ENCODE measurements at regions of chr5 and their contacts with region 1.

Region 1: DNA sequence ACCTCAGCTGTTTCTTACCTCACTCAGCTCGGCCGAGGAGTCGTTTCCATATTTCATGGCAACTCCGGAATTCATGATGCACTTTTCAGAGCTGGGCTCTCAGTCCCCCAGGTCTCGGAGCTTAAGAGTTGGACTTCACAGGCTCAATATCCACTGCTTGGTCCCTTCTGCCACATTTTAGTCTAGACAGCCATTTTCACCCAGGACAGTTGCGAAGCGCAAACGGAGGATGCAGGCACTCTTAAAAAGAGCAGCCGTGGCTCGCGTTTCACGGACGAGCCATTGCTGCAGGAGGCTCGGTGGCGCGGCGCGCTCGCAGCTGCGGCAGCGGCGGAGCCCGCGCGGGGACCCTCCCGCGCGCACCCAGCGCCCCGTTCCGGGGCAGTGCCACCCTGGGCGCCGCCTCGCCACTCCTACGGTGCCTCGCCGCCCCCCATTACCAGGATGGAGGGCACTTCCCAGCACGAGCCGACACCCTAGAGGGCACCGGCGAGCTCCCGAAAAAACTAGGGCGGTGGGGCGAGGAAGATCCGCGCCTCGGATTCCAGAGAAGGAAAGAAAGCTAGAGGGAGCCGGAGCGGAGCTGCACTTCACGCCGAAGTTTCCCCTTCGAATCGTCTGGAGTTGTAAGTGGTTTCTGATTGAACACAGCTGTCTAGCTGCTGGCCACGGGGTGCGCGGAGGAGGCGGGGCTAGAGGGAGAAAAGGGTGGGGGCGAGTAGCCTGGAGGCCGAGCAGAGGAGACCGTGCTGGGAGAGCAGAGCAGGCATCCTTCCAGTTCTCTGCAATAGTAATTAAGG is 140.3 kb downstream of the TSSK1B start:
- DNase-seq: peak; percentile 93
- ATAC-seq: peak; percentile 97

Region 2: DNA sequence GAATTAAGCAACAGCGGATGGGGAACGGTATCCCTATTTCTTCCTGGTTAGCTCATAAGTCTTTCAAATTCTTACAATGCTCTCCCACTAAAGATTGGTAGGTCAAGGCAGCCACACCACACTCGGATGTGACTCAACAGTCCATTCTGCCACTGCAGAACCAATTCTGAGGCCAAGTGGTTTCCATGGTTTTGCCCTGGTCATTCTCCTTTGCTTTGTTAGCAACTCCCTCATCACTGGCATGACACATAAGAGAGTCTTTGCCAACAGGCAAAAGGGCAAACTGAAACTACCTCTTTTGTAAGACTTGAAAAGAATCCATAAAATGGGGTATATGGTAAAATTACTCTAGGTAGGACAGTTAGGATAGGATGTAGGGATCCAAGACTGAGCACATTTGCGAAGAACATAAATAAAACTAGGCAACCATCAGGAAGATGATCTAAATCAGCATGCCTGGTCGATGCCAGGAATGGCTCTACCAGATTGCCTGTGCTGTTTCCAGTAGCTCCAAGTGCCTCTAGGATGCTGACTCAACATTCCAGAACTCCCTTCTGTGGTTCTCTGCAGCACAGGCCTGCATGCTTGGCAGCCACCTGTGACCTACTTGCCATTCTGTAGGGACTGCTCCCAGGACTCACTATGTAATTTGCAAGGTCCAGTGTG is 212.5 kb before region 1 on chr5:
- intact Hi-C with region 1: loop called (anchors 10 kb)
- DNase-seq: no peak
- ATAC-seq: no peak

Region 3: GRCh38 chr5:113123618-113124017 is 170.9 kb before region 1 on chr5:
- intact Hi-C with region 1: loop called (anchors 1 kb)
- DNase-seq: no peak
- ATAC-seq: no peak

Region 4: GRCh38 chr5:113204525-113205161 is 89.9 kb before region 1 on chr5:
- intact Hi-C with region 1: loop called (anchors 5 kb)
- DNase-seq: peak; percentile 74
- ATAC-seq: peak; percentile 71

Region 5: GRCh38 chr5:113215401-113216060 is 79.0 kb before region 1 on chr5:
- intact Hi-C with region 1: loop called (anchors 2 kb)
- DNase-seq: no peak
- ATAC-seq: no peak

Region 6: GRCh38 chr5:113255579-113256386 is 38.7 kb before region 1 on chr5:
- intact Hi-C with region 1: loop called (anchors 2 kb)
- DNase-seq: no peak
- ATAC-seq: peak; percentile 8

Region 7: DNA sequence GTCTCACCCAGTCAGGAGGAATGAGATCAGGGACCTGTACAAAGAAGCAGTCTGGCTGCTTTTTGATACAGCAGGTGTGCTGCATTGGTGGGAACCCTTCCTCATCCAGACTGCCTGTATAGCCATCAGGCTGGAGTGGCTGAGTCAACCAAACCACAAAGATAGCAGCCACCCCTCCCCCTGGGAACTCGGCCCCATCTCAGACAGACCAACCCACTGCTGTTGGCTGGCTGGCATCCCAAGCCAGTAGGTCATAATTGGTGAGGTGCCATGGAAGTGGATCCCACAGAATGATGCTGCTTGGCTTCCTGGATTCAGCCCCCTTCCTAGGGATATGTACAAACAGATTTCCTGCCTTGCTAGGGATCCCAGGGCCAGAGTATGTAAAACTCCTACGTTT is 279.9 kb after region 1 on chr5:
- intact Hi-C with region 1: no loop called
- DNase-seq: peak; percentile 58
- ATAC-seq: no peak

Measured in Right ventricle myocardium inferior (tissue), 1 donor.